Motor neuron (in vitro differentiated cells): ENCODE measurements at regions of chr5 and their contacts with region 1.

Region 1: GRCh38 chr5:25006737-25007302 is 362.0 kb upstream of the CDH10 start:
- ATAC-seq: peak in 7 of 8 experiments; percentile 5 to 86 (median 40)
- H3K4me3 ChIP-seq: no peak overlapping the region
- H3K27ac ChIP-seq: no peak overlapping the region
- H3K4me1 ChIP-seq: peaks cover 0 to 17% of the 10 kb centered on the region in 2 donors

Region 2: GRCh38 chr5:24633712-24634325 is 373.0 kb before region 1 on chr5:
- in situ Hi-C with region 1: loop called in 1 of 9 experiments (anchors 25 kb)
- ATAC-seq: peak in 7 of 8 experiments; percentile 32 to 67 (median 49)
- H3K4me3 ChIP-seq: no peak overlapping the region
- H3K27ac ChIP-seq: no peak overlapping the region
- H3K4me1 ChIP-seq: peaks cover 0 to 26% of the 10 kb centered on the region in 2 donors

Region 3: GRCh38 chr5:24652497-24652896 is 354.3 kb before region 1 on chr5:
- in situ Hi-C with region 1: loop called in 2 of 9 experiments (anchors 25 kb)
- ATAC-seq: no peak
- H3K4me3 ChIP-seq: no peak overlapping the region
- H3K27ac ChIP-seq: no peak overlapping the region
- H3K4me1 ChIP-seq: no peaks in the 10 kb centered on the region